ENCODE measurements at regions of chr5 and their contacts with region 1.

Region 1: DNA sequence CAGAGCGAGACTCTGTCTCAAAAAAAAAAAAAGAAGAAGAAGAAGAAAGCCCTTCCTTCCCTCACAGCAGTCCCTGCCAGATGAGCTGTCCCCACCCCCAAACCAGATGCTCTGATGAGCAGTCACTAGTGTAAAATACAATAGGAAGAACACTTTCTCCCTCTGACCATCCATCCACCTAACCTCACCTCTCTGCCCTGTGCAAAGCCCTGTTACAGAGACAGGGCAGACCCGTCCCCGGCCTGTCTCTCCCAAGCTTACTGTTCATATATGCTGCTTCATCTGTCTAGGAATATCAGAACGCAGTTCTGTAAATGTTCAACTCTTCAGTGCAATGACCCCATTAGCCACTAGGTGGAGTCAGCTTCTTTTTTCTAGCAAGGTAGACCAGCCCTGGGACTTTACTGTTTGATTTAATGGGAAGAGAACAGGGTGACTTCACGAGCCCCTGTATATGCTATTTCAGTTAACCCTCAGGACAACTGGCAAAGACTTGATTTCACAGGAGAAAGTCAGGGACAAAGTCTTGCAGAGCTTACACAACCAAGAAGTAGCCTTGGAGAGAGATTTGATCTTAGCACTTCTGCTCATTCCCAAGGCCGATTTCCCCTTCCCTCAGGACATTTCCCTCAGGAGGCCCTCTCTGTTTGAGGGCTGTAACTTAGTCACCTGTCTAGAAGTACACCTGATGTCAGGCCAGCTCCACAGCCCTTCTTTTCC is 14.9 kb upstream of the FGFR4 start:
- DNase-seq: peak; percentile 77 to 92
- H3K4me3 ChIP-seq: no peak overlapping the region
- H3K27ac ChIP-seq: no peak overlapping the region
- H3K4me1 ChIP-seq: peaks cover 0 to 10% (median 3%) of the 10 kb centered on the region in 4 donors
- H3K27me3 ChIP-seq: no peaks in the 10 kb centered on the region
- CTCF ChIP-seq: peak in 5 of 7 experiments; percentile 69 to 92 (median 86)
- EP300 ChIP-seq: no peak
- POLR2A ChIP-seq: no peak

Region 2: GRCh38 chr5:177113566-177114424 is 42.0 kb after region 1 on chr5:
- intact Hi-C with region 1: loop called (anchors 5 kb)
- DNase-seq: peak; percentile 81 to 91
- H3K4me3 ChIP-seq: peak overlapping the region in 1 of 4 donors; percentile 7
- H3K27ac ChIP-seq: peak overlapping the region in 2 of 5 donors; percentile 54 to 56
- H3K4me1 ChIP-seq: peaks cover 0 to 50% (median 32%) of the 10 kb centered on the region in 4 donors
- H3K27me3 ChIP-seq: no peaks in the 10 kb centered on the region
- CTCF ChIP-seq: peak in 6 of 7 experiments; percentile 52 to 99 (median 98)
- EP300 ChIP-seq: no peak
- POLR2A ChIP-seq: no peak